Activated CD4-positive, alpha-beta T cell treated with anti-CD3 and anti-CD28 coated beads for 36 hours (primary cell): ENCODE measurements at regions of chr19 and their contacts with region 1.

Region 1: GRCh38 chr19:2096480-2097329 is at the start of gene IZUMO4:
- DNase-seq: peak; percentile 100
- ATAC-seq: peak; percentile 85
- H3K4me3 Mint-ChIP-seq: peak within 1 kb of the TSS; percentile 98
- H3K27ac Mint-ChIP-seq: peak within 1 kb of the TSS; percentile 94
- H3K4me1 Mint-ChIP-seq: peaks cover 35% of the 10 kb centered on the region
- H3K27me3 Mint-ChIP-seq: no peaks in the 10 kb centered on the region
- total RNA-seq, gene IZUMO4: 15.2 to 16.6 TPM

Region 2: GRCh38 chr19:1863726-1864480 is 232.8 kb before region 1 on chr19:
- CTCF ChIA-PET with region 1: no interaction called
- POLR2A ChIA-PET with region 1: no interaction called
- intact Hi-C with region 1: loop called in 1 of 2 experiments (anchors 1 kb)
- DNase-seq: peak; percentile 97
- ATAC-seq: peak; percentile 75
- H3K4me3 Mint-ChIP-seq: peak overlapping the region; percentile 68
- H3K27ac Mint-ChIP-seq: peak overlapping the region; percentile 72
- H3K4me1 Mint-ChIP-seq: peaks cover 37% of the 10 kb centered on the region
- H3K27me3 Mint-ChIP-seq: no peaks in the 10 kb centered on the region

Region 3: GRCh38 chr19:1942078-1942933 is 154.4 kb before region 1 on chr19:
- CTCF ChIA-PET with region 1: no interaction called
- POLR2A ChIA-PET with region 1: no interaction called
- intact Hi-C with region 1: loop called in 1 of 2 experiments (anchors 1 kb)
- DNase-seq: peak; percentile 85
- ATAC-seq: peak; percentile 50
- H3K4me3 Mint-ChIP-seq: peak overlapping the region; percentile 93
- H3K27ac Mint-ChIP-seq: peak overlapping the region; percentile 88
- H3K4me1 Mint-ChIP-seq: peaks cover 30% of the 10 kb centered on the region
- H3K27me3 Mint-ChIP-seq: no peaks in the 10 kb centered on the region

Region 4: DNA sequence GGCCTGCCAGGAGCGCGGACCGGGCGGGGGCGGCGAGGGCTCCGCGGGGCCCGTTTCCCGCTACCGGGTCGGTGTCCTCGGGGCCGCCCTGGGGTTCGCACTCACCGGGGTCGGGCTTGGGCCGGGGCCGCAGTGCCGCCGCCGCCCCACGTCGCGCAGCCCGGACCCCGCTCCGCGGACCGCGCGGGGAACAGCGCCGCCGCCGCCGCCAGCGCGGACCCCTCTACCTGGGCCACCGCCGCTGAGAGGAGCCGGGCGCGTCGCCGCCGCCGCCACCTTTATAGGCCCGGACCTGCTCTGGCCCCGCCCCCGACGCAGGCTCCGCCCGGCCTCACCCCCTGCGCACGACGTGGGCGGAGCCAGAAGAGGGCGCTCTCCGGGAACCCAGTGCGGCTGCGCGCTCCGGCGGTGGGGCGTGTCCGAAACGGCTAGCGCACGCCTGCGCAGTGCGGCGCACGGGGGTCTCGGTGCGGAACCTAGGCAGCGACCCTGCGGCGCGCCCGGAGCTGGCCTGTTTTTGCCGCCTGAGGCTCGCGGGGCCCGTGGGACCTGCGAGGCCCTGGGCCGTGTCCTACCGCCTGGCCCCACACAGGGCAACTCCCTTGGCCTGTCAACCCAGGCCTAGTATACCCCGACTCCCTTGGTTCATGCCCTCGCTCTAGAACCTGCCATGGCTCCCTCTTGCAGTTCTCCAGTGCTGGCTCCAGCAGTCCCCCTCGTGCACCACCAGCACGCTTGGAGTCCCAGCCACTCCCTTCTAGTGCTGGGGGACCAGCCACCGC is 45.5 kb before region 1 on chr19 and contains the start of gene MKNK2:
- CTCF ChIA-PET with region 1: no interaction called
- POLR2A ChIA-PET with region 1: interaction called, 3 read pairs
- intact Hi-C with region 1: loop called in 1 of 2 experiments (anchors 1 kb)
- DNase-seq: peak; percentile 98
- ATAC-seq: peak; percentile 80
- H3K4me3 Mint-ChIP-seq: peak within 1 kb of the TSS; percentile 82
- H3K27ac Mint-ChIP-seq: peak within 1 kb of the TSS; percentile 94
- H3K4me1 Mint-ChIP-seq: peaks cover 51% of the 10 kb centered on the region
- H3K27me3 Mint-ChIP-seq: no peaks in the 10 kb centered on the region
- total RNA-seq, gene MKNK2: 139 to 155 TPM

Region 5: GRCh38 chr19:2151339-2152229 is 54.9 kb after region 1 on chr19 and contains the start of gene AP3D1:
- CTCF ChIA-PET with region 1: no interaction called
- POLR2A ChIA-PET with region 1: interaction called, 3 read pairs
- intact Hi-C with region 1: loop called (anchors 1 kb)
- DNase-seq: peak; percentile 100
- ATAC-seq: peak; percentile 90
- H3K4me3 Mint-ChIP-seq: peak within 1 kb of the TSS; percentile 81
- H3K27ac Mint-ChIP-seq: peak within 1 kb of the TSS; percentile 89
- H3K4me1 Mint-ChIP-seq: peaks cover 42% of the 10 kb centered on the region
- H3K27me3 Mint-ChIP-seq: no peaks in the 10 kb centered on the region
- total RNA-seq, gene AP3D1: 82.7 to 105 TPM

Region 6: DNA sequence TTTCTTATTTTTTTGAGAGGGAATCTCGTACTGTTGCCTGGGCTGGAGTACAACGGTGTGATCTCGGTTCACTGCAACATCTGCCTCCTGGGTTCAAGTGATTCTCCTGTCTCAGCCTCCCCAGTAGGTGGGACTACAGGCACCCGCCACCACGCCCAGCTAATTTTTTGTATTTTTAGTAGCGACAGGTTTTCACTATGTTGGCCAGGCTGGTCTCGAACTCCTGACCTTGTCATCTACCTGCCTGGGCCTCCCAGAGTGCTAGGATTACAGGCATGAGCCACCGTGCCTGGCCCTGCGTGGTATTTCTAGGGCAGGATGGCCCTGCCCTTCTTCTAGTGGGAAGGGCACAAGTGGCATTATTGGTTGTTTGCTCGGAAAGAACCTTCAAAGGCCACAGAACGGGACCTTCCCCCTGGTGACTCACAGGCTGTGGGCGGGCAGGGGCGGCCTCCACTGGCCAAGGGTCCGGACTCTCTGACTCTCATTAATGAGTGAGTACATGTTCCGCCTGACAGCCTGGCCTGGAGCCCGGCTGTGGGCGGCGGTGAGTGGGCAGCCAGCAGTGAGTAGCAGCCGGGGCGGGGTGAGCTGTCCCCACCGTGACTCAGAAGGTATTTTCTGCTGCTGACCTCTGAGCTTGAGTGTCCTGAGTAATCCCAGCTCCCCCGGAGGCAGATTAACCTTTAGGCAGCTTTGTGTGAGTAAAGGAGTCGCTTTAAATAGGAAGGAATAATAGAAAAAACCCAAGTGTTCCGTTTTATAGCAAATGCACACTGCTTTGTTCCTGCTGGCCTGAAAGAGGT is 72.1 kb after region 1 on chr19:
- CTCF ChIA-PET with region 1: no interaction called
- POLR2A ChIA-PET with region 1: no interaction called
- intact Hi-C with region 1: no loop called
- DNase-seq: peak; percentile 90
- ATAC-seq: peak; percentile 53
- H3K4me3 Mint-ChIP-seq: peak overlapping the region; percentile 43
- H3K27ac Mint-ChIP-seq: peak overlapping the region; percentile 72
- H3K4me1 Mint-ChIP-seq: peaks cover 71% of the 10 kb centered on the region
- H3K27me3 Mint-ChIP-seq: no peaks in the 10 kb centered on the region

Region 7: DNA sequence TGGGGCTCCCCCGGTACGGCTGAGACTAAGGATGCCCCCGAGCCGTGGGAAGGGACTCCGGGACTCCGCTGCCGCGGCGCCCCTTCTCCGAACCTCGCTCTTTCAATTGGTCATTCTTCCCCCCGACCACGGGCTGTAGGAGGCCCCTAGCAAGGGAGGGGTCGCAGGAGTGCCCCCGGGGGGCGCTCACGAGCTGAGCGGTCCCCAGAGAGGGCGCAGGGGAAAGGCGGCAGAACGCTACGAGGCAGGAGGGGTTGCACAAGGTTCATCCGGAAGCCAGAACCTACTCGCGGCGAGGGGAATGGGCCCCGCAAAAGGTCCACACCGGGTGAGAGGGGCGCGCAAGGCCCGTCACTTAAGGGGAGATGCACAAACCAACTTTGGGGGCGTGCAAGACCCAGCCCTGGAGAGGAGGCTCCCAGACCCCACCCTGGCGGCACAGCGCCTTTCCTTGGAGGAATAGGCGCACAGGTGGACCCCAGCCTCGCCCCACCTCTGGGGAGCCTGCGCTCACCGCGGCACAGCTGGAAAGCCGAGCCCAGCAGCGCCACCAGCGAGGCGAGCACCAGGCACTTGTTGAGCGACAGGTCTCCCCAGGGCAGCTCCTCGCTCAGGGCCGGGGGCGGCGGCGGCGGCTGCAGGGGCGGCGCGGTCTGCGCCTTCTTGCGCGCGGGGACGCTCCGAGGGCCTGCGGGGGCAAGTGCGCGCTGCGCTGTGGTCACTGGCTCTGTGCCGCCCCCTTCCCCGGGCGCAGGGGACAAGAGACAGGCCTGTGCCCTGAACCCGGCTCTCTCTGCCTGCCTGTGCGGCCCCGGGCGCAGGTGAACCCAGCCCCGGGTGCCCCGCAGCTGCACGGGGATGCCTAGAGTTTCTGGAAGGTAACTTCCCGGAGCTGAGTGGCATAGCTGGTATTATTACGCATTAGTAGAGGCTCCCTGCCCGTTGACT is 156.7 kb after region 1 on chr19:
- CTCF ChIA-PET with region 1: no interaction called
- POLR2A ChIA-PET with region 1: no interaction called
- intact Hi-C with region 1: no loop called
- DNase-seq: peak; percentile 69
- ATAC-seq: peak; percentile 23
- H3K4me3 Mint-ChIP-seq: peak overlapping the region; percentile 49
- H3K27ac Mint-ChIP-seq: no peak overlapping the region
- H3K4me1 Mint-ChIP-seq: peaks cover 24% of the 10 kb centered on the region
- H3K27me3 Mint-ChIP-seq: peaks cover 4% of the 10 kb centered on the region

Region 8: GRCh38 chr19:2427429-2428320 is 331.0 kb after region 1 on chr19 and contains the start of gene TIMM13:
- CTCF ChIA-PET with region 1: no interaction called
- POLR2A ChIA-PET with region 1: no interaction called
- intact Hi-C with region 1: loop called in 1 of 2 experiments (anchors 1 kb)
- DNase-seq: peak; percentile 98
- ATAC-seq: peak; percentile 95
- H3K4me3 Mint-ChIP-seq: peak within 1 kb of the TSS; percentile 86
- H3K27ac Mint-ChIP-seq: peak within 1 kb of the TSS; percentile 96
- H3K4me1 Mint-ChIP-seq: peaks cover 5% of the 10 kb centered on the region
- H3K27me3 Mint-ChIP-seq: no peaks in the 10 kb centered on the region
- total RNA-seq, gene TIMM13: 70.7 to 104 TPM